Activated B cell treated with CpG ODN at 0.5 μM for 24 hours (primary cell): ENCODE measurements at regions of chr4 and their contacts with region 1.

Region 1: DNA sequence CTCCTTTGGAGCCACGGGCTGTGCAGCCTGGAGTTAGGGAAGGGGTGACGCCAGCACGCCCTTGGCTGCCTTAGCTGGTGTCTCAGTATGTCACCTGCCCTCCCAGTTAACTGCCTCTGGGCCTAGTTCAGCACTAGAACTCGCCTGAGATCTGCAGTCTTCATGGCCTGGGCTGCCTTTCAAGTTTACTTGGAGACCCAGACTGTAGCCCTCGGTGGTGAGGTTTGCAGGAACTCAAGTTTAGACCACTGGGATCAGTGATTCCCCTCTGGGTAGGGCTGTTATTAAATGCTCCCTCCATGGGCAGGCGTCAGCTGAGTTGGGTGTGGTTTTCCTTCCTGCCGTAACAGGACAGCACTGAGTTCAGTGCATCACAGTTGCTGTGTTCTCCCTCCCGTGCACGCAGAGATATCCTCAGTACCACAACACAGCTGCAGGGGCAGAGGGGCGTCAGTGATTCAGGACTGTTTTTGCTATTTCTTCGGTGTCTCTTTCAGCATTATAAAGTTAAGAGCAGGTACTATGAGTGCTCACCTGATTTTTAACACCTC is 30.5 kb downstream of the PLAC8 start:
- DNase-seq: peak; percentile 33
- ATAC-seq: peak; percentile 96
- H3K4me3 Mint-ChIP-seq: peak overlapping the region; percentile 57
- H3K27ac Mint-ChIP-seq: peak overlapping the region; percentile 90
- H3K4me1 Mint-ChIP-seq: peaks cover 50% of the 10 kb centered on the region
- H3K27me3 Mint-ChIP-seq: no peaks in the 10 kb centered on the region
- CTCF ChIP-seq: no peak

Region 2: GRCh38 chr4:83153417-83153816 is 69.4 kb after region 1 on chr4:
- CTCF ChIA-PET with region 1: no interaction called
- POLR2A ChIA-PET with region 1: no interaction called
- intact Hi-C with region 1: no loop called
- DNase-seq: no peak
- ATAC-seq: peak; percentile 25
- H3K4me3 Mint-ChIP-seq: peak overlapping the region; percentile 37
- H3K27ac Mint-ChIP-seq: peak overlapping the region; percentile 8
- H3K4me1 Mint-ChIP-seq: peaks cover 39% of the 10 kb centered on the region
- H3K27me3 Mint-ChIP-seq: no peaks in the 10 kb centered on the region
- CTCF ChIP-seq: no peak

Region 3: DNA sequence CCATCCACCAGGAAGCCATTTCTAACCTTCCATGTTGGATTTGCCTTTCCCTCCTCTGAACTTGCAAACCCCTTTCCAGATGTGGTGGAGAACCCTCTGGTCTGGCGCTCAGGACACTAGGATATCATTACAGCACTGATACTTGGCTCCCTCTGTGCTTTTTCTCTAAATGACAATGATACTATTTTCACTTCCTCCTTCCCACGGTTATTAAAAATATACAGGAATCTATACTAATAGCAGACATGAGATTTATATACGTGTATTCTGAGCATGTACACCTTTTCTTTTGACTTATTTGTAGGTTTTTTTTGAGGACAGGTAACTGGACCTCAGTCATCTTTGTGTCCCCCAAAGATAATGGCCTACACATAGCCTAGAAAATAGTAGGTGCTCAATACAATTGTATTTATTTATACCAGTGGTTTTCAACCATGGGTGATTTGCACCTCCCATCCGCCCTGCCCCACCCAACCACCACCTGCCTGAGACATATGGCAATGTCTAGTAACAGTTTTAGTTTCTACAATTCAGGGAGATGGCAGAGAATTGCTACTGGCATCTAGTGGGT is 90.9 kb after region 1 on chr4:
- CTCF ChIA-PET with region 1: no interaction called
- POLR2A ChIA-PET with region 1: interaction called, 6 read pairs
- intact Hi-C with region 1: loop called (anchors 1 kb)
- DNase-seq: peak; percentile 32
- ATAC-seq: peak; percentile 74
- H3K4me3 Mint-ChIP-seq: peak overlapping the region; percentile 83
- H3K27ac Mint-ChIP-seq: peak overlapping the region; percentile 94
- H3K4me1 Mint-ChIP-seq: peaks cover 88% of the 10 kb centered on the region
- H3K27me3 Mint-ChIP-seq: no peaks in the 10 kb centered on the region
- CTCF ChIP-seq: no peak